Dendritic cell treated with granulocyte-macrophage colony-stimulating factor and Interleukin-4, amounts not matched to agents 40 ng/mL and 50 ng/mL, for 4 days (primary cell): ENCODE measurements at regions of chr3 and their contacts with region 1.

Region 1: GRCh38 chr3:192444096-192444790 is 283.1 kb downstream of the FGF12 start:
- H3K4me3 Mint-ChIP-seq: no peak overlapping the region
- H3K27ac Mint-ChIP-seq: no peak overlapping the region
- H3K4me1 Mint-ChIP-seq: no peaks in the 10 kb centered on the region
- H3K27me3 Mint-ChIP-seq: peaks cover 7% of the 10 kb centered on the region

Region 2: GRCh38 chr3:190883973-190884832 is 1560.0 kb before region 1 on chr3:
- intact Hi-C with region 1: loop called (anchors 10 kb)
- H3K4me3 Mint-ChIP-seq: no peak overlapping the region
- H3K27ac Mint-ChIP-seq: no peak overlapping the region
- H3K4me1 Mint-ChIP-seq: no peaks in the 10 kb centered on the region
- H3K27me3 Mint-ChIP-seq: no peaks in the 10 kb centered on the region

Region 3: DNA sequence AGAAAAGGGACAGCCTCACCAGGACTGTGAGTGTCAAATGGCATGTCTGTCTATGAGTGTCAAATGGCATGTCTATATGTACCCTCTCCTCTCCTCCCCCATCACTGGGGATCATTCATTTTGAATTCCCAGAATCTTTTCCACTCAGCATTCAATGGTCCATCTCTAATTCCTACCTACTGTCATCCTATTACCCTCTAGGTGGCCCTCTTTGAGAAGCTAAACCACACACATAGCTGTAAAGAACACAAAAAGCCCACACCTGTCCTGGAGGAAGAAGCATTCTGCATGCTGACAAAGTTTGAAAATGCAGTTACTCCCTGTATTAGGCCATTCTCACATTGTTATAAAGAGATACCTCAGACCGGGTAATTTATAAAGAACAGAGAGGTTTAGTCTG is 1029.5 kb before region 1 on chr3:
- intact Hi-C with region 1: loop called (anchors 5 kb)
- H3K4me3 Mint-ChIP-seq: no peak overlapping the region
- H3K27ac Mint-ChIP-seq: no peak overlapping the region
- H3K4me1 Mint-ChIP-seq: peaks cover 5% of the 10 kb centered on the region
- H3K27me3 Mint-ChIP-seq: peaks cover 4% of the 10 kb centered on the region

Region 4: GRCh38 chr3:192188218-192188835 is 255.9 kb before region 1 on chr3:
- intact Hi-C with region 1: loop called (anchors 2 kb)
- H3K4me3 Mint-ChIP-seq: no peak overlapping the region
- H3K27ac Mint-ChIP-seq: no peak overlapping the region
- H3K4me1 Mint-ChIP-seq: no peaks in the 10 kb centered on the region
- H3K27me3 Mint-ChIP-seq: no peaks in the 10 kb centered on the region

Region 5: GRCh38 chr3:192566706-192567290 is 122.6 kb after region 1 on chr3:
- intact Hi-C with region 1: no loop called
- H3K4me3 Mint-ChIP-seq: no peak overlapping the region
- H3K27ac Mint-ChIP-seq: no peak overlapping the region
- H3K4me1 Mint-ChIP-seq: peaks cover 10% of the 10 kb centered on the region
- H3K27me3 Mint-ChIP-seq: peaks cover 15% of the 10 kb centered on the region